T-cell (primary cell): ENCODE measurements at regions of chr13 and their contacts with region 1.

Region 1: GRCh38 chr13:29905845-29906244 is 55.4 kb upstream of the UBL3 start:
- DNase-seq: no peak
- ATAC-seq: no peak
- H3K4me3 ChIP-seq: no peak overlapping the region
- H3K4me3 Mint-ChIP-seq: no peak overlapping the region
- H3K27ac ChIP-seq: no peak overlapping the region
- H3K27ac Mint-ChIP-seq: no peak overlapping the region
- H3K4me1 ChIP-seq: peaks cover 14 to 26% of the 10 kb centered on the region in 2 experiments
- H3K4me1 Mint-ChIP-seq: peaks cover 20 to 26% (median 25%) of the 10 kb centered on the region in 3 donors
- H3K27me3 ChIP-seq: no peaks in the 10 kb centered on the region
- H3K27me3 Mint-ChIP-seq: peaks cover 0 to 1% of the 10 kb centered on the region in 2 donors

Region 2: DNA sequence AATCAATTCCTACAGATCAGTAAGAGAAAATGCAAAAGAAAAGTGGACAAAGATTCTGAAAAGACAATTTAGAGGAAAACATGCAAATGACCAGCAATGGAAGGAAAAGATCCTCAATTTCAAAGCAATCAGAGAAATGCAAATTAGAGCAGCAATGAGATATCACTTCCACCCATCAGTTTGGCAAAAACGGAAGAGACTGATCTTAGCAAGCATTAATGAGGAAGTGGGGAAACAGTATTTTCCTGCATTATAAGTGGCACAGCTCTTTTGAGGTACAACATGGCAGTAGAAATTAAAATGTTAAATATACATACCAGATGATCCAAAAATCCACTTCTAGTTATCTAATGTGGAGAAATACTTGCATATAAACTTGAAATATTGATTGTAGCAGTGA is 241.3 kb before region 1 on chr13:
- CTCF ChIA-PET with region 1: interaction called in 1 of 2 experiments, 10 read pairs
- POLR2A ChIA-PET with region 1: no interaction called
- DNase-seq: no peak
- ATAC-seq: no peak
- H3K4me3 ChIP-seq: no peak overlapping the region
- H3K4me3 Mint-ChIP-seq: no peak overlapping the region
- H3K27ac ChIP-seq: no peak overlapping the region
- H3K27ac Mint-ChIP-seq: no peak overlapping the region
- H3K4me1 ChIP-seq: no peaks in the 10 kb centered on the region
- H3K4me1 Mint-ChIP-seq: no peaks in the 10 kb centered on the region
- H3K27me3 ChIP-seq: peaks cover 0 to 9% of the 10 kb centered on the region in 2 experiments
- H3K27me3 Mint-ChIP-seq: peaks cover 14 to 30% of the 10 kb centered on the region in 2 donors